ENCODE measurements at regions of chr6 and their contacts with region 1.

Region 1: GRCh38 chr6:33417903-33418689 is at the start of gene CUTA:
- DNase-seq: peak; percentile 99
- H3K4me3 Mint-ChIP-seq: peak within 1 kb of the TSS; percentile 96
- H3K27ac Mint-ChIP-seq: peak within 1 kb of the TSS; percentile 100
- H3K4me1 Mint-ChIP-seq: peaks cover 57% of the 10 kb centered on the region
- H3K27me3 Mint-ChIP-seq: no peaks in the 10 kb centered on the region
- total RNA-seq, gene CUTA: 143 and 146 TPM in 2 replicates

Region 2: DNA sequence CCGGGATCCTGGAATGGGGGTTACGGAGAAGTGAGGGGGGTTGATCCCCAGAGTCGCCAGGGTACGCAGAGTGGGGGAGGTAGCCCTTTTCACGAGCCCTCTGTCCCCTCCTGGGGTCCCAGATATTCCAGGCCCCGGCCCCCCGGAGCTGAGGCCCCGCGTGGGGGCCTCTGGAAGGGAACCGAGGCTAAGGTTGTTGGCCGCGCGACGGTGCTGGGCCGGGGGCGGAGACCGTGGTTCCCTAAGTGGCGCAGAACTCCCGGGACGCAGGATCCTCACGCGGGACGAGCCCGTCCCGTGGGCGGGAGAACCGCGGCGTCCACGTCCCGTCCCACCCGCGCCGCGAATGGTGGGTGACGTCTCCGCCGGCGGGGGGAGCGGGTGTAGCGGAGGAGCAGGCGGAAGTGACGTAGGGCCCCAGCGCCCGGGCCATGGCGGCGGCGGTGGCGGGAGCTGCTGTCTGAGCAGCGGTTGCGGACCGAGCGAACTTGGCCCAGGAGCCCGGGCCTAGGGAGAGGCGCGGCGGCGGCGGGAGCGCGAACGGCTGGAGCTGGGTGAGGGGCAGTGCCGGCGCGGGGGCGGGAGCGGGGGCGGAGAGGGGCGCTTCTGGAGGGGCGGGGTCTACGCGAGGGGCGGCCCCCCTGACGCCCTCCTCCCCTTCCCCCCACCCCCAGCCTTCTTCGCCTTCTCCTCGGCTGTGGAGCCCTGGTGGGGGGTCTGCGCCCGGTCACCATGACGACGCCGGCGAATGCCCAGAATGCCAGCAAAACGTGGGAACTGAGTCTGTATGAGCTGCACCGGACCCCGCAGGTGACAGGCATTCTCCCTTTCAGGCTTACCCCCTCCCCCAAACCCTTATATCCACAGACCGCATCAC is 209.8 kb before region 1 on chr6 and contains the start of gene RING1:
- intact Hi-C with region 1: no loop called
- DNase-seq: peak; percentile 81
- H3K4me3 Mint-ChIP-seq: peak within 1 kb of the TSS; percentile 88
- H3K27ac Mint-ChIP-seq: peak within 1 kb of the TSS; percentile 92
- H3K4me1 Mint-ChIP-seq: peaks cover 48% of the 10 kb centered on the region
- H3K27me3 Mint-ChIP-seq: peaks cover 14% of the 10 kb centered on the region
- total RNA-seq, gene RING1: 46.0 and 46.1 TPM in 2 replicates

Region 3: DNA sequence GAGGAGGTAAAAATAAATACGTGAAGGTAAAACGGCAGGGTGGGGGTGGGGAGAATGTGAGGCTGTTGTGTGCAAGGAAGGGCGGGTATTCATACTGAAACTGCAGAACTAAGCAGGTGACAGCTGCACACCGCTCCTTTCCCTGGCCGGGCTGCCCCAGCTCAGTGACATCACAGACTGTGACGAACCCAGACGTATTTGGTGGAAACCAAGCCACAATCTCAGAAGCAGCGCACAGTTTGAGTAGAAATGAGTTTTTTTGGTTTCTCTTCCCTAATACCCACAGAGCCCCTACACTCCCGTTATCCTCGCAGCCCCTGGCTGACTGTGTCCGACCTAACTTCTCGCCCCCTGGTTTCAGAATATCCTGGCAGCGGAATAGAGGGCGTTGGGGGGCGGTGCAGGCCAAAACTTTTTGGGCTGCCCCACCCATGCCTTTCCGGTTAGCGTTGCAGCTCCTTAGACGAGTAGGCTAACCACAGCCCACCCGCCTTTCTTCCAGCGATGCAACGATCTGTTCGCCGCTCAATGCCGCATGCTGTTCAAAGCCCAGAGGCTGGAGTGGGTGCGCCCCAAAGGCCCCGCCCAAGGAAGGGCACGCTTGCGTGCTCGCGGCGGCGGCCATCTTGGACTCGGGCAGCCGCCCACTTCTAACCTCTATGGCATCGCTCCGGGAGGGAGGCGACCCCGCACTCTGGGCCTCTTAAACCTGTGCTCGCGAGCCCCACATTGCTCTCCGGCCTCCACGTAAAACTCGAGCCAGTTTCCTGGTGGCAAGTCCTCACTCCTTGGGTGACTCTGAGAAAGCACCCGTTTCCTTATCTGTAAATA is 152.9 kb after region 1 on chr6:
- intact Hi-C with region 1: loop called (anchors 2 kb)
- DNase-seq: peak; percentile 94
- H3K4me3 Mint-ChIP-seq: peak overlapping the region; percentile 85
- H3K27ac Mint-ChIP-seq: peak overlapping the region; percentile 99
- H3K4me1 Mint-ChIP-seq: peaks cover 41% of the 10 kb centered on the region
- H3K27me3 Mint-ChIP-seq: no peaks in the 10 kb centered on the region

Region 4: GRCh38 chr6:33700391-33701050 is 282.4 kb after region 1 on chr6:
- intact Hi-C with region 1: loop called (anchors 10 kb)
- DNase-seq: peak; percentile 66
- H3K4me3 Mint-ChIP-seq: peak overlapping the region; percentile 15
- H3K27ac Mint-ChIP-seq: peak overlapping the region; percentile 86
- H3K4me1 Mint-ChIP-seq: peaks cover 37% of the 10 kb centered on the region
- H3K27me3 Mint-ChIP-seq: no peaks in the 10 kb centered on the region